HEK293 (cell line): ENCODE measurements at regions of chr6 and their contacts with region 1.

Region 1: DNA sequence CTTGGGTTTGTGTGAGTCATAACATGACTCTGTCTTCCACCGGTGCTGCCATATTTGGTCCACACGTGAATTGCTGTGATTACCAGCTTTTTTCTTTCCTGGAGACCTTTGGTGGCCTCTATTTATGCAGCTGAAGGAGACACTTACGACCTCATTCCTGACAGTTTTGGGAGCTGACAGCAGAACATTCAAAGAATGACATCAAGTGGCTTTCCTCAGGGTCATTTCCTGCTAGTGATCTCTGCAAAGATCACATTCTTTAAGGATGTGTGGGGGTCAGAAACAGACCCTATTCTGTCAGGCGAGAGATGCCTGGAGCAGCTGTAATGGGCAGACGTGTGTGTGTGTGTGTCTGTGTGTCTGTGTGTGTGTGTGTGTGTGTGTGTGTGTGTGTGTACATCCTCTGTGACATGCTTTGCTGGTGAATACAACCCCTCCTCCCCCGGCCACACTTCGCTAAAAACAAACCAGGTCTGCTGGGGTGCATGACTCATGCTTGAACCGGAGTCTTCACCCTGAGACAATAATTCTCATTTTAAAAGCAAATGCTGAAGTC is 115.6 kb downstream of the TMEM170B start:
- H3K4me3 ChIP-seq: no peak overlapping the region
- H3K27ac ChIP-seq: no peak overlapping the region
- H3K4me1 ChIP-seq: no peaks in the 10 kb centered on the region
- CTCF ChIP-seq: no peak

Region 2: DNA sequence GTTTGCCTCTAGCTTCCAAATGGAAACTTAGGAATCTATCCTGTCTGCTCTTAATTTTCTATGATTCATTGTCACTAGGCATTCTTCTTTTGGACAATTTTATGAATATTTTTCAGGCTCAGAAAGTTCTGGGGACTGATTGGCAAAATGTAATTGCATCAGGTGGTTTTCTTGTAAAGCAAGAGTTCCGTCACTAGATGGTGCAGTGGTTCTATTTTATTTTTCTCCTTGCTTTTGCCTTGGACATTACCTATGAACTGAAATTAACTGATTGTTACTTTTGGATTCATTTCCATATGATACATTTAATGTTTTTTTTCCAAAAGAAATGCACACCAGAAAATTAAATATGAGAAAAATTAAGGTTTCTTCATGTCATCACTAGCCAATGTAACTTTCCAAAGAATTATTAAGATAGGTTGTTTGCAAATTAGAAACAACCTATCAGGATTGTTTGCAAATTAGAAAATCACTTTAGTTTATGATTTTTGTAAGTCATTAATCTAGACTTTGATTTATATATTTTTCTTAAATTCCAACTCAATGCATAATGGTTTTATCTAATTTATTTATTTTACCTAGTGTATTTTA is 67.6 kb before region 1 on chr6:
- CTCF ChIA-PET with region 1: interaction called, 12 read pairs
- POLR2A ChIA-PET with region 1: no interaction called
- H3K4me3 ChIP-seq: no peak overlapping the region
- H3K27ac ChIP-seq: no peak overlapping the region
- H3K4me1 ChIP-seq: no peaks in the 10 kb centered on the region
- CTCF ChIP-seq: peak; percentile 53; the same call in 1 of the 2 replicates

Region 3: DNA sequence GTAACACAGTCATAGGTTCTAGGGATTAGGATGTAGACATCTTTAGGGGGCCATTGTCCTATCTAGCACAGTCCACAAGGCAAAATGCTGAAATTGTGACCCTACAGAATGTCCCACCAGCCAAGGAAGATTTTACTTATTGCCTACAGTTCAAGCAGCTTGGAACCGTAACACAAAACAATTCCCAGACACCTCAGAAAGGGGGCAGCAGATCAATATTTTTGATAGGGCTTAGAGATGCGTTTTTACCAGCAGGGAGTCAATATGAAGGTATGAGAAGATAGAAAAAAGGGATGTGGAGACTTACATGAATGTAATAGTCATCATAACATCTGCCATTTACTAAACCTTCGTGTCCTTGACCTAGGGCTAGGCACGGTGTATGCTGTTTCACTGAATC is 34.6 kb before region 1 on chr6:
- CTCF ChIA-PET with region 1: interaction called, 13 read pairs
- POLR2A ChIA-PET with region 1: no interaction called
- H3K4me3 ChIP-seq: no peak overlapping the region
- H3K27ac ChIP-seq: no peak overlapping the region
- H3K4me1 ChIP-seq: no peaks in the 10 kb centered on the region
- CTCF ChIP-seq: no peak

Region 4: DNA sequence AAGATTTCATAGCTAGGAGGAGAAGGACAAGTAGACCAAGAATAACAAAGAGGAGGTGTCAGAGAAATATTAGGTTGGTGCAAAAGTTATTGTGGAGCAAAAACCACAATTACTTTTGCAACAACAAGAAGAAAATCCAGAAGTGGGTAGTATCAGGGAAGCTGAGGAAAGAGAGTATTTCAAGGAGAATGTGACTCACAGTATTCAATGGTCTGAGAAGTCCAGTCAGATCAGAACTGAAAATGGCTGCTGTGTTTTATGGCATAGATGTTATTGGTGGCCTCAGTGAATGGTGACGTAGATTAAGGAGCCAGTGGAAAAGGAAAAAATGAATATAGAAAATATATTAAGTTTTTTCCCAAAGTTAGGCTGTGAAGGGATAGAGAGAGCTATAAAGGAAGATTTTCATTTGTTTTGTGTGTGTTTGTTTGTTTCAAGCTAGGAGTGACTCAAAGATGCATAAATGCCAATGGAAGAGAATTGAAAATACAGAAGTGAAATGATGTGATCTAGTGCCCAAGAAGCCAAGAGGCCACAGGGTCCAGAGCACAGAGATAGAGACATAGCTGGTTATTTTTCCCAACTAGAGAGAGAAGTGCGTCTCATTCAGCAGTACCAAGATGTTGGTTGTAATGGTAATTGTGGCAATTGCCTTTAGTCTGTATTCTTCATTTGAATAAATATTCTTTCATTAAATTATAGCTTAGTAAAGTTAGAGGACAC is 12.7 kb after region 1 on chr6:
- CTCF ChIA-PET with region 1: interaction called, 37 read pairs
- POLR2A ChIA-PET with region 1: no interaction called
- H3K4me3 ChIP-seq: no peak overlapping the region
- H3K27ac ChIP-seq: no peak overlapping the region
- H3K4me1 ChIP-seq: no peaks in the 10 kb centered on the region
- CTCF ChIP-seq: no peak

Region 5: GRCh38 chr6:11900662-11901598 is 247.8 kb after region 1 on chr6:
- CTCF ChIA-PET with region 1: no interaction called
- POLR2A ChIA-PET with region 1: no interaction called
- H3K4me3 ChIP-seq: no peak overlapping the region
- H3K27ac ChIP-seq: no peak overlapping the region
- H3K4me1 ChIP-seq: no peaks in the 10 kb centered on the region
- CTCF ChIP-seq: no peak

Region 6: DNA sequence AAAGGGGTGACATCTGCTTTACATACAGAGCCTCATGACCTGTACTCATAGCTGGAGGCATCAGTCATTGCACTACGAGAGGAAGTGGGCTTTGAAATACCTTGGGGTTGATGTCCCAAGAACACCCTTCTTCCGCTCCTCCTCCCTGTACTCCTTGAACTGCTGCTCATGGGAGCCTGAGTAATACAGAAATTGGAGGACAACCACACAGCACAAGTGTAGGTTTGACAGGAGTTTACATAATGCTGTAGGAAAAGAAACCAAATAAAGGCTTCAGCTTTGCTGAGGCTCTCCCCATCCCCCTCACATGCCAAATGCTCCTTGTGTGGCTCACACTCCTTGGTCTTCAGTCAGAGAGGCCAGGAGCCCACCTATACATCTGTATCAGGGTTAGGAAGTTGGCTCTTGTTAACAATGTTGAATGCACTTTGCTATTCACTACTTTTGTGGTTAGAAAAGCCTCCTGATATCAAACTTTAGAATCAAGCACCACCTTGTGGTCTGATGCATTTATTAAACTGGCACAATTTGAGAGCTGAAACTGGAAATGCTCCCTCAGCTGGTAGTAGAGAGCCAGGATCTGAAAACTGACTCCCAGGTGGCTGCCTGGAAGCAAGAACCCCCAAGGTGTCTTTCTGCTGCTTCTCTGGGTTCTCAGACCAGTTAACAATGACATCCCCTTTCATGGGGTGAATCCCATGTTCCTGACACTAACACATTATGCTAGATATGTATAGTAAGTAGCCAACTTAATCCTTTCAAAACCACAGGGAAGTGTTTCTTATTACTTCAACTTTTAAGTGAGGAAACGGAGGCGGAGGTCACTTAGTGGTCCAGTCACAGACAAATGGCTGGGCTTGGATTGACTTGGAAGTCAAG is 580.8 kb after region 1 on chr6:
- CTCF ChIA-PET with region 1: interaction called, 38 read pairs
- POLR2A ChIA-PET with region 1: no interaction called
- H3K4me3 ChIP-seq: no peak overlapping the region
- H3K27ac ChIP-seq: no peak overlapping the region
- H3K4me1 ChIP-seq: no peaks in the 10 kb centered on the region
- CTCF ChIP-seq: peak; percentile 80

Region 7: DNA sequence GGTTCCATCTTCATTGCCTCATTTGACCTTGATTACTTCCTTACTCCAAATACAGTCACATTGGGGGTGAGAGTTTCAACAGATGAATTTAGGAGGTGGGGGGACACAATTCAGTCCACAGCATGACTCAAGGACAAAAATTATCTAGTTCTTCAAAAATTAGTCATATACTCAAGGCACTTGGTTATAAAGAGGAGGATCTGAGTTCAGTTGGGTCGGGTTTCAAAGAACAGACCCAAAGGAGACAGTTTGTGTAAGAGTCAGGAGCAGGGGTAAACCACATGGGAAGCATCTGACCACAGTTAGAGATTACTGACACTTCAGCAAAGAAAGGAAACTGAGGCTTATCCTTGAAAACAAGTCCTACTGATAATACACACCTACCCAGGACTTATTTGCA is 1537.3 kb after region 1 on chr6:
- CTCF ChIA-PET with region 1: no interaction called
- POLR2A ChIA-PET with region 1: no interaction called
- H3K4me3 ChIP-seq: no peak overlapping the region
- H3K27ac ChIP-seq: no peak overlapping the region
- H3K4me1 ChIP-seq: no peaks in the 10 kb centered on the region
- CTCF ChIP-seq: no peak